Activated CD4-positive, alpha-beta T cell treated with anti-CD3 and anti-CD28 coated beads, Interleukin-2, amount 10 ng/mL, durations not matched to agents 7 days and 5 days (primary cell): ENCODE measurements at regions of chr3 and their contacts with region 1.

Region 1: DNA sequence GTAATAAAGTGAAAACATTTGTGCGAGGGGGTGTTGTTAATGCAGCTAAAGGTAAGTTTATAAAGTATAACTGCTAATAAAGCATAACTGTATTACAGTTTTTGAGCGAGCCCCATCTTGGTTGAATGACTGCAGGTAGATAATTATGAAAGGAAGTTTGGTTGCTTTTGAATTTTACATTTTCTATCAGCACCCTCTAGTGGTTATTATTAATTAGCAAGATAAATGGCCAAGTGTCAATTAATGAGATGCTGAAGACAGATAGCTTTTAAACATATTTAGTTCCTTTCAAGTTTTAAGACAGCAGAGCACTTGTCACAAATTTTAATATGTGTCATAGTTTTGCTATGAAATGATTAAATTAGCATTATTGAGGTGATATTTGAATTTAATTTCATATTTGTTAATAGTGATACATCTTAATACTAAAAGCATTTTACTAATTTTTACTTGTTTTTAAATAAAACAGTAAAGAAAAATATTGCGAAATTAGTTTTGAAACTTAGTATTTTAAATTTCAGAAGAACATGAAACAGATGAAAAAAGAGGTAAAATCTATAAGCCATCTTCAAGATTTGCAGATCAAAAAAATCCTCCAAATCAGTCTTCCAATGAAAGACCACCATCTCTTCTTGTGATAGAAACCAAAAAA is 15.1 kb downstream of the U2SURP start:
- DNase-seq: no peak
- H3K4me3 Mint-ChIP-seq: no peak overlapping the region
- H3K27ac Mint-ChIP-seq: no peak overlapping the region
- H3K4me1 Mint-ChIP-seq: peaks cover 17% of the 10 kb centered on the region
- H3K27me3 Mint-ChIP-seq: no peaks in the 10 kb centered on the region

Region 2: GRCh38 chr3:143037867-143038266 is 21.4 kb after region 1 on chr3:
- CTCF ChIA-PET with region 1: no interaction called
- POLR2A ChIA-PET with region 1: interaction called, 15 read pairs
- DNase-seq: no peak
- H3K4me3 Mint-ChIP-seq: no peak overlapping the region
- H3K27ac Mint-ChIP-seq: no peak overlapping the region
- H3K4me1 Mint-ChIP-seq: peaks cover 13% of the 10 kb centered on the region
- H3K27me3 Mint-ChIP-seq: no peaks in the 10 kb centered on the region